ENCODE measurements at regions of chr10 and their contacts with region 1.

Region 1: GRCh38 chr10:6108603-6109443 is 20.0 kb downstream of the RBM17 start:
- DNase-seq: no peak
- H3K4me3 ChIP-seq: no peak overlapping the region
- CTCF ChIP-seq: peak in 1 of 3 donors; percentile 53
- POLR2A ChIP-seq: no peak

Region 2: DNA sequence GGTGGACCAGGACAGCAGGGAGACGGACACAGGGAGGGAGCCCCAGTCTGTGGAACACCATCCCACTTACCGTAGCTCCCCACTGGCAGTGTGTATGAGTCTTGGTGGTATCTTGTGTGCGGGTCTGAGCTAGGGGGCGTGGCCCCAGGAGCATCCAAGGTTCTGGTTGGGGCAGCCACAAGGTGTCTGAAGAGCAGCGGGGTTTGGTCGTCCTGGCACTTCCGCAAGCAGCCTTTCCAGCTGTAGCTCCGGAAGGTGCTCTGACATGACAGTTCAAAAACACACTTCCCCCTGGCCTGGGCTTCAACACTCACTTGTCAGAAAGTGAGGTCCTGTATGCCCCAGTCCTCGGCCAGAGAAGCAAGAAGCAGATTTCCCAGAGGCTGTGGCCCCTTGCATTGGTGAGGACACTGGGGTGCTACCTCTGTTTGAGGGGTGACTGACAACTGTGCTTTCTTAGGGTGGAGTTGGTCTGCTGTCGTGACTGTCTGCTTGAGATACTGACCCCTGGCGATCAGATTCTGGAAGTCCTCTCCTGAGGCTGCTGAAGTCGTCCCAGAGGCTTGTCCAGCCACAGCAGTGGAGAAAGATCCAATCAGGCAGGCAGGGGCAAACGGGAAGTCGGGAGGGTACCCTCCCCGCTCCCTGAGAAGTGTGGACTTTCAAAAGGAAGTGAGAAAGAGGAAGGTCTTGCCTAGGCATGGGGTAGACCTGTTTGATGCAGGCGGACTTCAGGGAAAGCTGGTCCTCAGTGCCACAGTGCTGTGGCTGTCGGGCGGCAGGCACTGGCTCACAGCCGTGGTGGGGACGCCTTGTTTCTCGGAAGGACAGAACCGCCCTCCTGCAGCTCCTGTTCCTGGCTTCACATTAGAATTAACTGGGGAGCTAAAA is 42.5 kb after region 1 on chr10:
- intact Hi-C with region 1: loop called (anchors 5 kb)
- DNase-seq: peak; percentile 71 to 92
- H3K4me3 ChIP-seq: no peak overlapping the region
- CTCF ChIP-seq: no peak
- POLR2A ChIP-seq: no peak

Region 3: DNA sequence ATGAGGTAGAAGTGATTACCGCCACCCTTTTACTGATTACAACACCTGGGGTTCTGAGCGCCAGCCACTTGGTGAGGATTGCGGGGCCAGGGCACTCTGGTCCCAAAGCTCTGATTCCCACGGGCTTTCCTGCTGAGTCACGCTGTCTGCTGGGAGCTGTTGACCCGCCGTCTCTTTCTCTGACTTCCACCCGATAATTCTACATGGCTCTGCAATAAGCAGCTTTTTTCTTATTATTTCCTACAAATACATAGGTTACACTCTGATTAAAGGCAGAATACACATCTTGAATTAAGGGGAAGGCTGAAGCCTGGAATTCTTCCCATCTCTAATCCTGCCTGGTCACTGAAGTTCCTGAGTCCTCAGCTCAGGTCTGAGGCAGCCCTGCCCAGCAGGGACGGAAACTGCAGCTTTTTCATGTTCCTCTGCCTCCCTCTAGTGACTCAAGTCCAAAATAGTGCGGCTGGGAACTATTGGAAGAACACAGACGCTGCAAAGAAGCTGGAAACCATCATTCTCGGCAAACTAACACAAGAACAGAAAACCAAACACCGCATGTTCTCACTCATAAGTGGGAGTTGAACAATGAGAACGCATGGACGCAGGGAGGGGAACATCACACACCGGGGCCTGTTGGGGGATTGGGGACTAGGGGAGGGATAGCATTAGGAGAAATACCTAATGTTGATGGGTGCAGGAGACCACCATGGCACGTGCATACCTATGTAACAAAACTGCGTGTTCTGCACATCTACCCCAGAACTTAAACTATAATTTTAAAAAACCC is 292.9 kb after region 1 on chr10:
- intact Hi-C with region 1: loop called (anchors 10 kb)
- DNase-seq: peak in 1 of 2 donors; percentile 76
- H3K4me3 ChIP-seq: no peak overlapping the region
- CTCF ChIP-seq: peak in 1 of 3 donors; percentile 84
- POLR2A ChIP-seq: no peak

Measured in lower leg skin (tissue), 4 donors.